ENCODE measurements at regions of chr15 and their contacts with region 1.

Region 1: DNA sequence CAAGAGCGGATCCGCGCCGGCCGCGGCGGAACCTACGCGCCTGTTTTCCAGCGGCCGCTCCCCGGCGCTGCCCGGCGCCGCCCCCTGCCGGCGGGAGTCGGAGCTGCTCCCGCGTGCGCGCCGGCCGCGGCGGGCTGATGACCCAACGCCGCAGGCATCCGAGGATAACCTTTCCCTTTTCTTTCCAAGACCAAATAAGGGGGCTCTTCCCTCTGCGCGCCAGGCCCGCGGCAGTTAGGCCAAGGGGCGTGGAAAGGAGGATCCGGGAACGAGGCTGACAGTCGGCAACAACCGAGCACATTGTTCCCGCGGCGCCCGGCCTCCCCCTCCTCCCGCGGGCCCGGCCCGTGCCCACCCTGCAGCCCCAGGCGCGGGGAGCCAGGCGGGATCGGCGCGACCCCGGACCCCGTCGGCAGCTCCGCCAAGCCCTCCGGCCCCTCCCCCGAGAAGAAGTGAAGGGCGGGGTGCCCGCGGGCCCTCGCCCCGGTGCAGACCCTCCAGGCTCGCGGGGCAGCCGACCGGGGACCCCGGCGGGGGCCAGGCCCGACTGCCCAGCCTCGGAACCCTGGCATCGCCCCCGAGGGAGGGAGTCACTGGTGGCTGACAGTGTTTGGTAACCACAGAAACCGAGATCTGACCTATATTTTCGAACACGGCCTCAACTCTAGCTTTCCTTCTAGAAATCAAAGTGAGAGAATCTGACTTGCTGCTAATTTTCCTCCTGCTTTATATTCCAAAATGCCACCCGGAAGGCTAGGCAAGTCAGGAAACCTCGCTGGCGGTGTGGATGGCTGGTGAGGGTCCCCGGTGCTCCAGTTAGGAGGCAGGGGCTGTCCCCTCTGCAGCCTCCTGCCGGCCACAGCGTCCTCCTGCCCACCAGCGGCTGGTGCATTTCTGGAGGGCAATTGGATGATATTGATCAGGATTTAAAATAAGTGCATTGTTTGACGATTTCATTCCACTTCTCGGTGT is 45.6 kb upstream of the SYNM start:
- DNase-seq: peak; percentile 81
- ATAC-seq: peak; percentile 84
- H3K4me3 ChIP-seq: peak overlapping the region; percentile 82
- H3K27ac ChIP-seq: peak overlapping the region; percentile 34
- H3K4me1 ChIP-seq: no peaks in the 10 kb centered on the region
- H3K27me3 ChIP-seq: no peaks in the 10 kb centered on the region
- CTCF ChIP-seq: peak; percentile 61

Region 2: DNA sequence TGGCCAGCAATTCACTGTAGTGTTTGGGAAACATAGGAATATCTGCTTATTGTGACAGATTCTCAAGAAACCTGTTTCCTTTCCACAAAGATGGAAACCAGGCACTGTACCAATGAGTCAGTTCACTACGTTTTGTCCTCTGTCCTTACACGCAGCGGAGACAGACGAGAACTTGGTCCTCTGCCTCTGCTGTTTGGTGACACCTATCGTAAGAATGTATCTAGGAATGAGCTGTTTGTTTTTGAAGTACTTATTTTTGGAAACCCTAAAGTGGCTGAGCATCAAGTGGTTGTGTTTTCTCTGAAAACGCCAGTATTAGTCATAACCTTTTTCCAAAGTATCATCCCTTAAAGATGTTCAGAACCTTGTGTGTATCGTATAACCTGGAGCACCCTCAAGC is 144.7 kb before region 1 on chr15:
- CTCF ChIA-PET with region 1: no interaction called
- POLR2A ChIA-PET with region 1: no interaction called
- intact Hi-C with region 1: loop called (anchors 10 kb)
- DNase-seq: peak; percentile 86
- ATAC-seq: peak; percentile 95
- H3K4me3 ChIP-seq: no peak overlapping the region
- H3K27ac ChIP-seq: peak overlapping the region; percentile 70
- H3K4me1 ChIP-seq: peaks cover 24% of the 10 kb centered on the region
- H3K27me3 ChIP-seq: no peaks in the 10 kb centered on the region
- CTCF ChIP-seq: peak; percentile 34; the same call in 1 of the 2 replicates

Region 3: DNA sequence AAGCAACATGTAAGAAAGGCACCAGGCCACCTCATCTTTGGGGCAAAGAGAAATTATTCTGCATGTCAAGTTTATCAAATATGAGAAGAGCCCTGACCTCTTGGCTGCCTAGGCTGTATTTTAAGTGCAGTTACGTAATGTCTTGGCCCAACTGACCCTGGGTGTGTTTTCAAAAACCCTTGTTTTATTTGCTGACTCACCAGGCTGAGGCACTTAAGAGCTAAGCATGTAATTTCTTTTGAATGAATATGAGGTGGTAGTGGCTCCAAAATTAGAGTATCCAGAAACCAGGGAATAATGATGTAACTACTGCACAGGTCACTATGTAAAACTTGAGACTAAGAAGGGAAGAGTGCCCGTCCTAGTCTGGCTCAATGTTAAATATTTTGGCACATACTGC is 76.0 kb before region 1 on chr15:
- CTCF ChIA-PET with region 1: no interaction called
- POLR2A ChIA-PET with region 1: no interaction called
- intact Hi-C with region 1: loop called (anchors 10 kb)
- DNase-seq: peak; percentile 77
- ATAC-seq: peak; percentile 57
- H3K4me3 ChIP-seq: no peak overlapping the region
- H3K27ac ChIP-seq: peak overlapping the region; percentile 55
- H3K4me1 ChIP-seq: peaks cover 36% of the 10 kb centered on the region
- H3K27me3 ChIP-seq: no peaks in the 10 kb centered on the region
- CTCF ChIP-seq: no peak

Region 4: GRCh38 chr15:99014803-99015676 is 44.3 kb before region 1 on chr15:
- CTCF ChIA-PET with region 1: interaction called, 3 read pairs
- POLR2A ChIA-PET with region 1: interaction called, 12 read pairs
- intact Hi-C with region 1: loop called (anchors 2 kb)
- DNase-seq: peak; percentile 79
- ATAC-seq: peak; percentile 85
- H3K4me3 ChIP-seq: peak overlapping the region; percentile 79
- H3K27ac ChIP-seq: peak overlapping the region; percentile 90
- H3K4me1 ChIP-seq: peaks cover 26% of the 10 kb centered on the region
- H3K27me3 ChIP-seq: no peaks in the 10 kb centered on the region
- CTCF ChIP-seq: no peak

Region 5: DNA sequence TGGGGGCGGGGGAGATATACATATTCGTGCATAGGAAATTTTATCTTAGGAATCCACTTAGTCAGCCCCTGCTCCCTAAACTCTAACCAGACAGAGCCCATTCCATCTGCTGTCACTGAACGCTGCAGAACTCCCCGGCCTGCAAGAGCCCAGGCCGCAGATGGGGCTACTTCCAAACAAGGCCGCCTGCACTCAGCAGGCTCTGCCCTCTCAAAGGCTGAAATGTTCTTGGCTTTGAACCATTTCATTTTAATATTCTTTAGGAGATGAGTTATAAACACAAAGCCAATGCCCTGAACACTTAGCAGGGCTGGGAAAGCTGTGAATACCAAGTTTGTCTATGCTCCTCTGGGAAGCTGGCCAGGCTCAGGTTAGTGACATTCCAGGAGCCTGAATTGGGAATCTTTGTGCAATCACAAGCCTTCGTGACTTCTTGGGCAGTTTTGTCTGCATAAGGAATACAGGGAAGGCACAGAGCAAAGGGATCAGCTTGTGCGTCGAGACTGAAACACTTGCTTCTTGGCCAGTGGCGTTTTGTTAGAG is 110.5 kb after region 1 on chr15:
- CTCF ChIA-PET with region 1: no interaction called
- POLR2A ChIA-PET with region 1: no interaction called
- intact Hi-C with region 1: no loop called
- DNase-seq: no peak
- ATAC-seq: no peak
- H3K4me3 ChIP-seq: no peak overlapping the region
- H3K27ac ChIP-seq: no peak overlapping the region
- H3K4me1 ChIP-seq: no peaks in the 10 kb centered on the region
- H3K27me3 ChIP-seq: no peaks in the 10 kb centered on the region
- CTCF ChIP-seq: no peak

Region 6: DNA sequence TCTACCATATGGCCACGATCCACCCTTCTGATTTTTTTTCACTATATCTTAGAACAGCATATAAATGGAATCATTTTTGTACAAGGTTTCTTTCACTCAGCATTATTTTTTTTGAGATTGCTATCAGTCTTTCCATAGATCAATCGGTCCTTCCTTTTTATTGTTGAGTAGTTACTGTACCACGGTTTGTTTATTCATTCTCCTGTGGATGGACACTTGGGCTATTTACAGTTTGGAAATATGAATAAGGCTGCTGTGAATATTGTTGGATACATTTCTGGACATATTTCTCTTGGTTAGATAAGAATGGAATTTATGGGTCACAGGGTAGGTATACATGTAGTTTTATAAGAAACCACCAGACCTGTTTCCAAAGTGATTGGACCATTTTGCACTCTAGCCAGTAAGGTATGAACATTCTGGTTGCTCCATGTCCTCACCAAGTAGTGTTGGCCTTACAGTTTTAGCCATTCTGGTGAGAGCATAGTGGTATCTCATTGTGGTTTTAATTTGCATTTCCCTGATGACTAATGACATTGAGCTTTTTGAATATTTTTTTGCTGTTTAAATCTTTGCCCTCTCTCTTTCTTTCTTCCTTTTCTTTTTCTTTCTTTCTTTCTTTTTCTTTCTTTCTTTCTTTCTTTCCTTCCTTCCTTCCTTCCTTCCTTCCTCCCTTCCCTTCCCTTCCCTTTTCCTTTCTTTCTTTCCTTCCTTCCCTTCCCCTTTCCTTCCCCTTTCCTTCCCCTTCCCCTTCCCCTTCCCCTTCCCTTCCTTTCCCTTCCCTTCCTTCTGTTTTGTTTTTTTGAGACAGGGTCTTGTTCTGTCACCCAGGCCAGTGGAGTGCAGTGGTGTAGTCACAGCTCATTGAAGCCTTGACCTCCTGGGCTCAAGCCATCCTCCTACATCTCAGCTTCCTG is 1909.0 kb after region 1 on chr15:
- CTCF ChIA-PET with region 1: interaction called, 11 read pairs
- POLR2A ChIA-PET with region 1: no interaction called
- intact Hi-C with region 1: no loop called
- DNase-seq: peak; percentile 53
- ATAC-seq: peak; percentile 74
- H3K4me3 ChIP-seq: no peak overlapping the region
- H3K27ac ChIP-seq: no peak overlapping the region
- H3K4me1 ChIP-seq: peaks cover 10% of the 10 kb centered on the region
- H3K27me3 ChIP-seq: no peaks in the 10 kb centered on the region
- CTCF ChIP-seq: no peak